ENCODE measurements at regions of chr1 and their contacts with region 1.

Region 1: GRCh38 chr1:150944856-150945255 is 18.7 kb downstream of the SETDB1 start:
- DNase-seq: no peak
- H3K4me3 ChIP-seq: no peak overlapping the region
- H3K27ac ChIP-seq: no peak overlapping the region
- H3K4me1 ChIP-seq: no peaks in the 10 kb centered on the region
- H3K27me3 ChIP-seq: no peaks in the 10 kb centered on the region
- CTCF ChIP-seq: no peak

Region 2: DNA sequence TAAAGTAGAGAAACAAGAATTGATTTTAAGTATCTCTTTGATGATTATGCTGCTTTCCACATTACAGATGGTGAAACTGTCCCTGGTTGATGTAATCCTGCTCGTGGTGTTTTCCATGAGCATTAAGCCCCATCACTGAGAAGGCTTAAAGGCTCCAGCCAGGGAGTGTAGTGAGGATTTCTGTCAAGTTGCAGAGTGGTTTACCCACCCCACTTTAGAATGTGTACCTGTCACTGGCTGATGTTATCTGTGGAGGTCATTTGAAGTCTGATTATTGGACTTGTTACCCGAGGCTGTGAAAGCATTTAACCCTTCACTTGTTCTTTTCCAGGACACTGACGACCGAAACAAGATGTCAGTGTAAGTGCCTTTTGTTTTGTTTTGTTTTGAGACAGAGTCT is 16.9 kb after region 1 on chr1:
- intact Hi-C with region 1: loop called (anchors 2 kb)
- DNase-seq: no peak
- H3K4me3 ChIP-seq: no peak overlapping the region
- H3K27ac ChIP-seq: no peak overlapping the region
- H3K4me1 ChIP-seq: no peaks in the 10 kb centered on the region
- H3K27me3 ChIP-seq: no peaks in the 10 kb centered on the region
- CTCF ChIP-seq: no peak

Measured in tibial artery (tissue), 4 donors.